ENCODE measurements at regions of chr5 and their contacts with region 1.

Region 1: GRCh38 chr5:127290019-127290945 is at the start of gene MEGF10:
- DNase-seq: peak; percentile 17 to 33
- ATAC-seq: peak; percentile 76 to 78
- H3K4me3 ChIP-seq: peak within 1 kb of the TSS; percentile 55 to 83 (median 64)
- H3K27ac ChIP-seq: peak within 1 kb of the TSS; percentile 58 to 81 (median 74)
- H3K4me1 ChIP-seq: peaks cover 0 to 10% of the 10 kb centered on the region in 2 donors
- H3K27me3 ChIP-seq: no peaks in the 10 kb centered on the region
- CTCF ChIP-seq: peak; percentile 60 to 72 (median 67)
- POLR2A ChIP-seq: no peak
- total RNA-seq, gene MEGF10: 6.7 to 25.4 (median 15.7) TPM

Region 2: DNA sequence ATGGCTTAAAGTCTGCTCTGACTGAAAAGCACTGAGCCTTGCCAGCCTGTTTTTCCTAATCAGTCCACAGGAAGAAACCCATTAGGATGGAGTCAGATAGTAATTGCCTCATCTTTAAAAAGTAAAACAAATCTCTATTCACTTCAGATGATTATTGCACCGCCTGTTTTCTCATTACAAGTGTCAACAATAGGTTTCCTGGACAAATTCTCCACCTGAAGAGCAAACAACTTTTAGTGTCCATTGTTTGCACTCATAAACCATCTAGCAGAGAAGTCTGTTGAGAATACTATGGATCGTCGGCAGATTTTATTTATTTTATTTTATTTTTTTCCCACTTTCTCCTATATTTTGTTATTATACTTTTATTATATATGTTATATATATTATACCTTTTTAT is 237.2 kb before region 1 on chr5:
- in situ Hi-C with region 1: no loop called
- intact Hi-C with region 1: no loop called
- DNase-seq: no peak
- ATAC-seq: no peak
- H3K4me3 ChIP-seq: no peak overlapping the region
- H3K27ac ChIP-seq: no peak overlapping the region
- H3K4me1 ChIP-seq: no peaks in the 10 kb centered on the region
- H3K27me3 ChIP-seq: no peaks in the 10 kb centered on the region
- CTCF ChIP-seq: no peak
- POLR2A ChIP-seq: no peak

Region 3: GRCh38 chr5:127243011-127243410 is 47.3 kb before region 1 on chr5:
- in situ Hi-C with region 1: no loop called
- intact Hi-C with region 1: no loop called
- DNase-seq: no peak
- ATAC-seq: no peak
- H3K4me3 ChIP-seq: no peak overlapping the region
- H3K27ac ChIP-seq: no peak overlapping the region
- H3K4me1 ChIP-seq: no peaks in the 10 kb centered on the region
- H3K27me3 ChIP-seq: no peaks in the 10 kb centered on the region
- CTCF ChIP-seq: no peak
- POLR2A ChIP-seq: no peak

Region 4: DNA sequence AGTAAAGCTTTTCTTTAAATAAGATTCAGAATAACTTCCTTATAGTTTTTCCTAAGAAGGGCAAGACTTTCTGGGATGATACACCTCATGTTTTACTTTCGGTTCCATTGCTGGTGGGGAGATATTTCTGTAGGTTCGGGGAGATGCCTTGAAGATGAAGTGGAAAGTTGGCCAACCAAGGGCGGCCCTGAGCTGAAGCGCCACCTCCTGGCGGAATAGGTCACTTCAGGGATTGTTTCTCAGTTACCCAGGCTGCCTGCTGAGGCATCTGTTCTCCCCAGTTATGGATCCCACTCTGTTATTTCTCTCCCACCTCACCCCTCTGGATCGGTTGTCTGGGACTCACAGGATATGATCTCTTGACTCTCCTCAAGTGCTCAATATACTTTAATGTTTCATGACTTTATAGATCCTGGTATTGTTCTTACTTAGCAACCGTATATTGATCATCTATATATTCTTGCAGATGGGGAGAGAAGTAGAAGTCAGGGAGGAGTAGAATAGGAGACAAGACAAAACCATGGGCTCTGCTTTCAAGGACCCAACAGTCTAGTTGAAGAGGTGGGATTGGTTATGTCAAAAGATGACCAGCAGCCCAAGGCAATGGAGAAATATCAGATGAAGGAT is 23.7 kb after region 1 on chr5:
- in situ Hi-C with region 1: no loop called
- intact Hi-C with region 1: loop called (anchors 1 kb)
- DNase-seq: peak in 1 of 2 donors; percentile 27
- ATAC-seq: peak in 1 of 2 donors; percentile 36
- H3K4me3 ChIP-seq: no peak overlapping the region
- H3K27ac ChIP-seq: no peak overlapping the region
- H3K4me1 ChIP-seq: peaks cover 0 to 10% of the 10 kb centered on the region in 2 donors
- H3K27me3 ChIP-seq: no peaks in the 10 kb centered on the region
- CTCF ChIP-seq: peak; percentile 19 to 64 (median 57)
- POLR2A ChIP-seq: no peak

Region 5: DNA sequence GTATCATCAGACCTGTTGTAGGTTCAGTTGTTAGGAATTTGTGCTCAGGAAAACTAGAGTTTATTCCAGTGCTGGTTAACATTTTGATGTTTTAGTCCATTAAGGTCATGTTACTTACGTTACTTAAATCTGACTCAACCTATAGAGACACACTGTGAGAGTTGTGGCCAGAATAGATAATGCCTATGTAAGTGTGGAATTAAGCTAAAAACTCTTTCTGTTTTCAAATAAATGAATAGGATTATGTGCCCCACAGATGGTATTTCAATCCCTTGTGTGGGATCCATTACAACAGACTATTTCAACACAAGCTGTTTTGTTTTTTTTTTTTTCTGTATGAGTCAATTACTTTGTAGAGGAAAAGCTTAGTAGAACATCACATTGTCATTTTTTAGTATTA is 68.5 kb after region 1 on chr5:
- in situ Hi-C with region 1: no loop called
- intact Hi-C with region 1: no loop called
- DNase-seq: no peak
- ATAC-seq: no peak
- H3K4me3 ChIP-seq: no peak overlapping the region
- H3K27ac ChIP-seq: no peak overlapping the region
- H3K4me1 ChIP-seq: peaks cover 4 to 6% of the 10 kb centered on the region in 2 donors
- H3K27me3 ChIP-seq: no peaks in the 10 kb centered on the region
- CTCF ChIP-seq: no peak
- POLR2A ChIP-seq: no peak

Region 6: DNA sequence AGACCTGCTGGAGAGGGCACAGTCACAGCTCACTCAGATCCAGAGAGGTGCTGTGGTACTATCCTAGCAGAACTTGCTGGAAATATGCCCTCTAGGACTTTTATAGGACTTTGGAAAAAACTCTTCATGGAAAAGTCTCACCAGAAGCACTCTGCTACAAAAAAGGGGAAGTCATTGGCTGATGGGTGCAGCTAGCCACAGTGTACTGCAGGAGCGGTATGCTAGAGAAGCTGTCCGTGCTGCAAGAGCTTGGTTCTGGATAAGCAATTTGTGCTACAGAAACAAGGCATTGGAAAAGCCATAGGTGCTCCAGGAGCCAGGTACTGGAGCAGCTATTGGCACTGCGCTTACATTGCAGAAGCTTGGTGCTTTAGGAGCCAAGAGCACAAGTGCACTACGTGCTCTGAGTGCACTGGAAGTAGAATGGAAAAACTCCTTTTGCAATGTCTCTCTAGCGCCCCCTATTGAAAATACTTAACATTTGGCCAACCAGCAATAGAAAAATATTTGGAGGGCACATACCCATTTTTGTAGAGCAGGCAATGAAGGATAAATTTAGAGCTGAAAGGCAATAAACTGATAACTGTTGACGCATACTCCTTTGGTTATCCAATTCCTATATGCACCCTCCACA is 83.7 kb after region 1 on chr5:
- in situ Hi-C with region 1: no loop called
- intact Hi-C with region 1: loop called (anchors 5 kb)
- DNase-seq: no peak
- ATAC-seq: no peak
- H3K4me3 ChIP-seq: no peak overlapping the region
- H3K27ac ChIP-seq: no peak overlapping the region
- H3K4me1 ChIP-seq: peaks cover 23 to 26% of the 10 kb centered on the region in 2 donors
- H3K27me3 ChIP-seq: no peaks in the 10 kb centered on the region
- CTCF ChIP-seq: peak in 1 of 5 experiments; percentile 27
- POLR2A ChIP-seq: no peak

Region 7: DNA sequence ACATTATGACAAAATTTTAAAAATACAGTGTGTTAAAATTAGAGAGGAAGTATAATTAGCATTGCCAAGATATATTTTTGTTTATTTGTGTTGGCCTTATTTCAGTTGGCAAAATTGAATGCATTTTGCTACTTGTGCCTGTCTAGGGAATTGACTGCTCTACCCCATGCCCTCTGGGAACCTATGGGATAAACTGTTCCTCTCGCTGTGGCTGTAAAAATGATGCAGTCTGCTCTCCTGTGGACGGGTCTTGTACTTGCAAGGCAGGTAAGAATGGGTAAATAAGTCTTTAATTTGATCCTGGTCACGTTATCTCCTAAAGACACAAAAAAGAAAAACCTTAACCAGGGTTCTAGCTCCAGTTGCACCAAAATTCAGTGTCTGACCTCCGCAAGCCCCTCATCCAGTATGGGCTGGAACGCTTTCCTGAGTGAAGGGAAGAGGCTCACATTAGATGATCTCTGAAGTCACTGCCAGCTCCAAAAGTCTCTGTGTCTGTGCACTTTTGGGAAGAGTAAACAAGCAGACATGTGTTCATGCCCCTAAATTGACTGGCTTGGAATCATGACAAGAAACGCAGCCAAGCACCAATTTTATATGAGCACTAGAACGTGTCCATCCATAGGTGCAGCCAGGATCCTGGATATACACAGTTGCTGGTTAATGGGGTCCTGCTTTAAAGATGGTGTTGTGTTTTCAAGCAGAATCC is 128.8 kb after region 1 on chr5:
- in situ Hi-C with region 1: loop called in 1 of 4 experiments (anchors 5 kb)
- intact Hi-C with region 1: loop called (anchors 2 kb)
- DNase-seq: no peak
- ATAC-seq: peak; percentile 48 to 65
- H3K4me3 ChIP-seq: no peak overlapping the region
- H3K27ac ChIP-seq: peak overlapping the region in 2 of 4 donors; percentile 42 to 58
- H3K4me1 ChIP-seq: peaks cover 17 to 21% of the 10 kb centered on the region in 2 donors
- H3K27me3 ChIP-seq: no peaks in the 10 kb centered on the region
- CTCF ChIP-seq: peak in 2 of 5 experiments; percentile 22 to 30
- POLR2A ChIP-seq: no peak

Region 8: DNA sequence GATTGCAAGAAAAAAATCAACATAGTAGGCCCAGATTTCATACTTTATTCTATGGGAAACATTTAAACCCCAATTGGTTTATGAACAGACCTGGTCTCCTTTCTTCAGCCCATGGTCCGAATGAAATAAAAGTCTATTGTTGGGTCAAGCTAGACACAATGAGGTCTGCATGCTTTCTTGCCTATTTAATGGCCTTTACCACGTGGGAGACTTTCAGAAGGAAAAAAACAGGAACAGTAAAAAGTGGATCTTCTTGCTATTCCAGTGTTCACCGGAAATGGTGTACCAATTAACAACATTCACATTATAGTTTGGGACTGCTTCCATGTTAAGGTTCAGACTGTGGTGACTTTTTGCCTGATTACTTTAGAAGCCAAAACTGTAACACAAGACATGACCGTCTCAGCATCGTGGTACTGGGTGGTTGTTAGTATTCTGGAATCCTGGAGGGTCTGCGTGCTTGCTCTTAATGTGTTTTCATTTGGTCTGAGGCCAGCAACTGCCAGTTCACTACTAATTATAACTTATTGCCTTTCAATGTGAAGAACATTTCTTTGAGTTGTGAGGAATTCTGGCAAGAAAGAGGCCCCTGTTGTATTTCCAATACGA is 141.8 kb after region 1 on chr5:
- in situ Hi-C with region 1: loop called in 1 of 4 experiments (anchors 10 kb)
- intact Hi-C with region 1: no loop called
- DNase-seq: no peak
- ATAC-seq: no peak
- H3K4me3 ChIP-seq: no peak overlapping the region
- H3K27ac ChIP-seq: no peak overlapping the region
- H3K4me1 ChIP-seq: no peaks in the 10 kb centered on the region
- H3K27me3 ChIP-seq: no peaks in the 10 kb centered on the region
- CTCF ChIP-seq: no peak
- POLR2A ChIP-seq: no peak

Region 9: DNA sequence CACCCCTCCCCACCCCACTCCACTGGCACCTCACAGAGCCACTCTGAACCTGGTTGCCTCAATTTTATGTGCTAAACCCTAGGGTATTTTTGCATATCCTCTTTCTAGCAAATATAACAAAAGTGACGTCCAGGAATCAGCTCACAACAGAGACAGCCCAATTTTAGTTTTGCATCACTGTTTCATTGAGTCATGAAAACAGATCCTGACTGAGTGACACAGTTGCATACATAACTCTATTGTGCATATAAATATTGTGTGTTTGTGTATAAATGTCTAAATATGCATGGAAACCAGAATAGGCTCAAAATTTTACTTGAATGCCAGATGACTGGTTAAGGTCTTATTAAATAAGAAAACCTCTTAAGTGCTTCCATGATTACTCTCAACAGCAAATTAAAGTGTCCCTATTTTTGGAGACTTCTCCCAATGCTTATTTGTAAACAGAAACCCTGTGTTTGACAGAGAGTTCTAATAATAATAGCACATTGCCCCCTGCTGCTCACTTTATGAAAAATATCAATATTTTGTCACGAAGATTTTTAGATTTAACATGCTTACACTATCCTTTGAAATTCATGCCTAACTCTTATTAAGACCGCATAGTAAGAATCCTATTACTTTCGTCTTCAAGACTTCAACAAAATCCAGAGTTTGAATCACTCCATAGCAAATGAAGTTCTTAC is 151.7 kb after region 1 on chr5:
- in situ Hi-C with region 1: loop called (anchors 5 to 10 kb)
- intact Hi-C with region 1: loop called (anchors 1 kb)
- DNase-seq: no peak
- ATAC-seq: peak in 1 of 2 donors; percentile 46
- H3K4me3 ChIP-seq: no peak overlapping the region
- H3K27ac ChIP-seq: no peak overlapping the region
- H3K4me1 ChIP-seq: peaks cover 3 to 7% of the 10 kb centered on the region in 2 donors
- H3K27me3 ChIP-seq: no peaks in the 10 kb centered on the region
- CTCF ChIP-seq: peak in 4 of 5 experiments; percentile 29 to 32 (median 30)
- POLR2A ChIP-seq: no peak

Region 10: DNA sequence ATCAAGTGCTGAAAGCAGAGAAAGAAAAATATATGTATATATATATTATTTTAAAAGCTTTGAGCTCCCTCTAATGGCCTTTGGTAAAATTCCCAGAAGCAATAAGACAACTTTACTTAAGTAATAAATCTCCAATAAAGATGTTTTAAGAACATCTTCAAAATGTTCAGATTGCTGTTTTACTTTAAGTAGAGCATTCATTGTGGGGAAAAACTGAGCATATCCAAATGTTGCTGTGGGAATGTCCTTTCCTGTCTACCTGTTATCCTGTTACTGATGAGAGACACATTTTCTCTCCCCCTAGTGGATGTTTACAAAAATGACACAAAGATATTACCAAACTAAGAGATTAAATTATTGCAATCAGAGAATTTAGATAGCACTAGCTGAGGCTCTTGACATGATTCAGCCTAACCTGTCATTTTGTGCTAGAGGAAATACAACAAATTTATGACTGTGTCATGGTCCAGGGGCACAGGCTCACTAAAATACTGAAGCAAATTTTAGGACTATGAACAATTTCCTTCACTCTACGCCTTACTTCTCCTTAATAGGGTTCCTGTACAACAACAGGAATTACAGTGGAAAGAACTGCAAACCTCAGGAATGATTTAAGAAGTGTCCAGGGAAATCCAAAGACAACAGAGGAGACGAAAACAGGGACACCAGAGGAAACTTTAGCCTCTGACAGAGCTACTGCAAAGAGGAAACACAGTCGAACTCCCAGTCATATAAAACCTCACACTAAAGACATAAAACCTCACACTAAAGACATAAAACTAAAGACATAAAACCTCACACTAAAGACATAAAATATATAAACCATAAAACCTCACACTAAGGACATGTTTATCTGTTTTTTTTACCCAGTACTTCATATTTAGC is 202.8 kb after region 1 on chr5:
- in situ Hi-C with region 1: loop called in 1 of 4 experiments (anchors 10 kb)
- intact Hi-C with region 1: loop called (anchors 1 kb)
- DNase-seq: no peak
- ATAC-seq: peak; percentile 65 to 69
- H3K4me3 ChIP-seq: no peak overlapping the region
- H3K27ac ChIP-seq: no peak overlapping the region
- H3K4me1 ChIP-seq: no peaks in the 10 kb centered on the region
- H3K27me3 ChIP-seq: no peaks in the 10 kb centered on the region
- CTCF ChIP-seq: peak; percentile 52 to 67 (median 58)
- POLR2A ChIP-seq: no peak

Measured in gastrocnemius medialis (tissue), 4 donors.